ENCODE measurements at regions of chr14 and their contacts with region 1.

Region 1: DNA sequence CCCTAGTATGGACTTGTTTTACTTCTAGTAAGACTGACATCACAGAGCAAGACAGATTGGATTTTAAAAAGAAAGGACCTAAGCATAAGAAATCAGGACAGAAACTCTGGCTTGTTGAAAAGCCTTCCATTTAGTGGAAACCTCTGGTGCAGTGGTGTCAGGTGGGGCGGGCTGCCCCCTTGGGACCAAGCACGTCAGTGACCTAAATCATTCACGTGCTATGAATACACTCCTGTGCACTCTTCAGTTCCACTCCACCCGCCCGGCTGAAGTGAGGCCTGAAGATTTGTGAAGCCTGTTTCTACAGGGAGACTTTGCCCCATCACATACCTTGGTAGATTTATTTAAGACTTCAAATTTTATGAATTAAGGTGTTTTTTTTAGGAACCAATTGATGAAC is 58.2 kb upstream of the STRN3 start:
- DNase-seq: no peak
- H3K4me3 ChIP-seq: no peak overlapping the region
- H3K27ac ChIP-seq: no peak overlapping the region
- H3K27me3 ChIP-seq: no peaks in the 10 kb centered on the region
- CTCF ChIP-seq: no peak

Region 2: GRCh38 chr14:30983858-30984257 is 100.5 kb before region 1 on chr14:
- CTCF ChIA-PET with region 1: interaction called, 11 read pairs
- POLR2A ChIA-PET with region 1: interaction called, 4 read pairs
- DNase-seq: no peak
- H3K4me3 ChIP-seq: no peak overlapping the region
- H3K27ac ChIP-seq: no peak overlapping the region
- H3K27me3 ChIP-seq: no peaks in the 10 kb centered on the region
- CTCF ChIP-seq: no peak

Region 3: DNA sequence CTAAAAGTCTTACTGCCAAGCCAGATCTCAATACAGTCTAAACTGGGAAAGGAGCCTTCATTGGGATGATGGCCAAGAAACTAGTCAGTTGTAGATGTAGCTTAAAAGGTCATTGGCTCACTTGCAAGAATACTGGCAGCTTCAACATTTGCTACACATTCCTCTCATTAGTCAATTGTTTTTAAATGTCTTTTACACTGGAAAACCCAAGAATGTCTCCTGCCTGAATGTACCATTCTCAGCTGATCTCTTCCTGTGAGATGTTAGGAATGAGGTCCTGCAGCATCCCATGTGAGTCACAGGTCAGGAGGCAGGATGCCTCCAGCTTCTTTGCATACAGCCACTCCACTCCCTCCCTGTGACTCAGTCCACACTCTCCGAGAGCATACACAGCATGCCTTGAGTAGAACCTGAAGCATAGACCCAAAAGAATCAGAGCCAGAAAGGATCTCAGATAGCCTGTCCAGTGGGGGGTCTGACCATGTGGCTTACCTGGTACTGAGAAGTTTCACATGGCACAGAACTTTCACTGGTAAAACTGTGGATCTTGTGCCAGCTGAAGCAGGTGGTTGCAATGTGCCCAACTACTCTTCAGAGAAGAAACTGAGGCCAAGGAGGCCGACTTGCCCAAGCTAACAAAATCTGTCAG is 179.2 kb after region 1 on chr14:
- CTCF ChIA-PET with region 1: no interaction called
- POLR2A ChIA-PET with region 1: no interaction called
- DNase-seq: peak; percentile 99
- H3K4me3 ChIP-seq: no peak overlapping the region
- H3K27ac ChIP-seq: peak overlapping the region; percentile 94
- H3K27me3 ChIP-seq: no peaks in the 10 kb centered on the region
- CTCF ChIP-seq: no peak